Activated T-helper 1 cell treated with anti-CD3 and anti-CD28 coated beads, Interleukin-12 subunit alpha, Interleukin-12 subunit beta, Interleukin-2, Interleukin-4 antibody, amounts not matched to agents 30 ng/mL and 10 ng/mL and 1 ng/mL, durations not matched to agents 14 hours and 24 hours and 36 hours (primary cell): ENCODE measurements at regions of chr1 and their contacts with region 1.

Region 1: GRCh38 chr1:42392967-42393848 is 12.6 kb downstream of the RIMKLA start:
- DNase-seq: no peak
- H3K4me3 Mint-ChIP-seq: peak overlapping the region; percentile 15
- H3K27ac Mint-ChIP-seq: peak overlapping the region; percentile 40
- H3K4me1 Mint-ChIP-seq: peaks cover 14% of the 10 kb centered on the region
- H3K27me3 Mint-ChIP-seq: no peaks in the 10 kb centered on the region

Region 2: DNA sequence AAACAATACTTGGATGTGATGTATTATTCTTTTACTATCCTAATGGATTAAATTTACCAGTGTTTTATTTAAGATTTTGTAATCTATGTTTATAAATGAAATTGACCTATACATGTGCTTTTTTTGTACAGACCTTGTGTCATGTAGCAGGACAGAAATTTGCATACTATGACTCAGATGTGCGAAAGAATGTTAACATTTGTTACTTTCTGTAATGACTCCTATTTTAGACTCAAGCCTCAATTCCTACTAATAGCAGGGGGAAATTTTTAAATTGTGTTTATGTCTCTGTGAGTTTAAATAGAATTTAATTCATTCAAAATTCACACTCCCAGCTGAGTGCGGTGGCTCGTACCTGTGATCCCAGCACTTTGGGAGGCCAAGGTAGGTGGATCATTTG is 34.4 kb before region 1 on chr1:
- intact Hi-C with region 1: loop called (anchors 2 kb)
- DNase-seq: no peak
- H3K4me3 Mint-ChIP-seq: no peak overlapping the region
- H3K27ac Mint-ChIP-seq: no peak overlapping the region
- H3K4me1 Mint-ChIP-seq: no peaks in the 10 kb centered on the region
- H3K27me3 Mint-ChIP-seq: peaks cover 14% of the 10 kb centered on the region

Region 3: DNA sequence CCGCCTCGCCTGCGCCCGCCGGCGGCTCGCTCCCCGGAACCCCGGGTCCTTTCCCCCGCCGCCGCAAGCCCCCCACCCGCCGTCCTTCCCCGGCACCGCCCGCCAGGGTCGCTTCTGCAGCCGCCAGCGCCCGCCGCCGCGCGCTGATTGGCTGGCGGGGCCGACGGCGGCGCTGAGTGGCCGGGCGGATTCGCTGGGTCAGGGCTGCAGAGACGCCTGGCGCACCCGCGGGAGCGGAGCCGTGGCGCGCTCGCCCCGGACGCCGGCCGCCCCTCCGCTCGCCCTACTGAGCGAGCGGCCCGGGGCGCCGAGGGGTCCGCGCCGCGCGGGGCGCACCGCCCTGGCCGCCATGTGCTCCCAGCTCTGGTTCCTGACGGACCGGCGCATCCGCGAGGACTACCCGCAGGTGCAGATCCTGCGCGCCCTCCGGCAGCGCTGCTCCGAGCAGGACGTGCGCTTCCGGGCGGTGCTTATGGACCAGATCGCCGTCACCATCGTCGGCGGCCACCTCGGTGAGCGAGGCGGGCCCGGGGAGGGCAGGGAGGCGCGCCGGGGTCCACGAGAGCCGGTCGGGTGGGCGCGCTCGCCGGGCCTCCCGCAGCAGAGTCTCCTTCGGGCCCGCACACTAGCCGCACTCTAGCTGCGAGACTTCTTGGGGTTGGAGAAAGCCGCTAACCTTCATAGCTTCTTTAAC is 12.5 kb before region 1 on chr1 and contains the start of gene RIMKLA:
- intact Hi-C with region 1: loop called (anchors 1 kb)
- DNase-seq: peak; percentile 53
- H3K4me3 Mint-ChIP-seq: peak within 1 kb of the TSS; percentile 85
- H3K27ac Mint-ChIP-seq: peak within 1 kb of the TSS; percentile 49
- H3K4me1 Mint-ChIP-seq: peaks cover 22% of the 10 kb centered on the region
- H3K27me3 Mint-ChIP-seq: peaks cover 25% of the 10 kb centered on the region
- total RNA-seq, gene RIMKLA: 3.3 and 4.8 TPM in 2 replicates